Astrocyte of the cerebellum (primary cell): ENCODE measurements at regions of chr6 and their contacts with region 1.

Region 1: GRCh38 chr6:123434186-123434585 is 202.6 kb downstream of the TRDN start:
- DNase-seq: peak; percentile 16
- H3K4me3 ChIP-seq: no peak overlapping the region
- CTCF ChIP-seq: no peak

Region 2: DNA sequence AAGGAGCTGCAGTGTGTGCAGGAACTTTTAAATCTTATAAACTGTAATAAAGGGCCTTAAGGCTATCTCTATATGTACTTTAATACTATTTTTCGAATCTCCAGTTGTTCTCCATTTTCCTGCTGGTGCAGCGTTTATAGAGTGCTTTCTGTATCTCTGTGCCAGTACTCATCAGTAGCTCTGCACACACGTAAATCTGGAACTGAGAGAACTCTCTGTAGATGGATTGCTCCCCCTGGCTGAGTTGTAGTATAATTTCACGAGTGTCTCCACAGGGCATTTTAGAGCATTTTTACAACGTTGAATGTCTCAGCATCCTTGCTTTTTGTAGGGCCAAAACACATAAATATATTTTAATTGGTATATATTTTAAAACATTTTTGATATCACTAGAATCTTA is 53.9 kb before region 1 on chr6:
- in situ Hi-C with region 1: no loop called
- DNase-seq: peak; percentile 3
- H3K4me3 ChIP-seq: no peak overlapping the region
- CTCF ChIP-seq: peak; percentile 59

Region 3: GRCh38 chr6:123489589-123489988 is 55.4 kb after region 1 on chr6:
- in situ Hi-C with region 1: no loop called
- DNase-seq: no peak
- H3K4me3 ChIP-seq: no peak overlapping the region
- CTCF ChIP-seq: no peak

Region 4: DNA sequence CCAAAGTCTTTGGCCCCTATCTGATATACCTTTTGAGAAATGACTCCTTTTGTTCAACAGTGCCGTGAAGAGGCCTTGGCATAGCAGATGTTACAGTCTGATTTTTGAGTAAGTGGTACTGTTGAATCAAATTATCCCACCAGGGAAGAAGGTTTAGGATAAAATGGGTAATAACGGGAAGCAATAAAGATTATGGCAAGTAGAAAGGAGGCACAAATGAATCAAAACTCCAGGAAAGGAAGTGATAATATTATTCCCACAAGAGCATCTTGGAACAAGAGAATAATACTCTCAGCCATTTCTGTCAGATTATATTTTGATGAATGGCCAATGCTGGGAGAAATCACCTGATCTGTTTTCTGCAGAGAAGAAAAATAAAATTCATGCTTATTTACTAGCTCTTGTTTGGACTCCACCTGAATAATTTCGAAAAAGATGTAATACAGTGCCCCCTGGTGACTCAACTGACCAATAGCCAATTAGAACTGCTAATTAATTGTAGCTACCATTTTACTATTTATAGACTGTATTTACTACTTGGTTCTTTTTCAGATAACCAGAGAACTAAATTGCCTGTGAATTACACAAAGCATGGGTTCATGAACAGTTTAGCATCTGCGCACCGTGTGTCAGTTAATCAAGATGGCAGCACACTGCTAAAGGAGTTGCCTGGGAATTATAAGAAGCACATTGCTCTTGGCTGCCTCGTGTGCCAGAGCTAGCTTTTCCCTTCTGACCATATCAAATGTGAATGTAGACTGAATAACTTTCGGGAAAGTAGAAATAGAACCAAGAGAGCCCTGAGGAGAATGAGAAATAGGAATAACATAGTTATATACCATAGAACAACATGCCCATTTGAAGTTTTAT is 281.1 kb after region 1 on chr6:
- in situ Hi-C with region 1: loop called (anchors 25 kb)
- DNase-seq: peak; percentile 29
- H3K4me3 ChIP-seq: no peak overlapping the region
- CTCF ChIP-seq: peak; percentile 50